A549 (cell line): ENCODE measurements at regions of chr1 and their contacts with region 1.

Region 1: GRCh38 chr1:149886396-149887195 is 12.8 kb upstream of the BOLA1 start:
- DNase-seq: peak; percentile 93 to 99
- ATAC-seq: peak; percentile 59 to 74
- H3K4me3 ChIP-seq: peak overlapping the region; percentile 54
- H3K27ac ChIP-seq: peak overlapping the region; percentile 91 to 96
- H3K4me1 ChIP-seq: peaks cover 22% of the 10 kb centered on the region
- CTCF ChIP-seq: no peak
- EP300 ChIP-seq: no peak
- POLR2A ChIP-seq: peak; percentile 95
- RAD21 ChIP-seq: 0 out of 5 replicates have a peak, but pooled peaks of 1 of the 2 experiments have one; percentile 6

Region 2: DNA sequence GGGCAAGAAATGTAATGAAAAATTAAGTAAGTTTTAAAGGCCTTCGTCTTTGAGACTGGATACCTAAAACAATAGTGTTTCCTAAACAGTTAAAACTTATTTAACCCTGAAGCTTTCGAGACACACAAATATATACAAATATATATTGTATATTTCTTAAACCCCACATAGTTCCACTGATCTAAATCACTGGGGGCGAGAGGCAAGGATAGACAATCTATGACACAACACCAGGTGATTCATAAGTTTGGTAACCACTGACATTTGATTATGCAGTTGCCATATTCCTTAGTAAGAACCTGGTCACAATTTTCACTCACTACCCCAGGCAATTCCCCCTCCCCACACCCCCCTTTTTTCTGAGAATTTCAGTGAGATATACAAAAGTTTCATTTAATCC is 42.5 kb before region 1 on chr1:
- CTCF ChIA-PET with region 1: interaction called, 8 read pairs
- POLR2A ChIA-PET with region 1: interaction called, 34 read pairs
- DNase-seq: peak; percentile 15 to 55
- ATAC-seq: no peak
- H3K4me3 ChIP-seq: peak overlapping the region; percentile 55
- H3K27ac ChIP-seq: peak overlapping the region; percentile 79 to 89
- H3K4me1 ChIP-seq: peaks cover 48% of the 10 kb centered on the region
- CTCF ChIP-seq: no peak
- EP300 ChIP-seq: no peak
- POLR2A ChIP-seq: no peak
- RAD21 ChIP-seq: no peak

Region 3: DNA sequence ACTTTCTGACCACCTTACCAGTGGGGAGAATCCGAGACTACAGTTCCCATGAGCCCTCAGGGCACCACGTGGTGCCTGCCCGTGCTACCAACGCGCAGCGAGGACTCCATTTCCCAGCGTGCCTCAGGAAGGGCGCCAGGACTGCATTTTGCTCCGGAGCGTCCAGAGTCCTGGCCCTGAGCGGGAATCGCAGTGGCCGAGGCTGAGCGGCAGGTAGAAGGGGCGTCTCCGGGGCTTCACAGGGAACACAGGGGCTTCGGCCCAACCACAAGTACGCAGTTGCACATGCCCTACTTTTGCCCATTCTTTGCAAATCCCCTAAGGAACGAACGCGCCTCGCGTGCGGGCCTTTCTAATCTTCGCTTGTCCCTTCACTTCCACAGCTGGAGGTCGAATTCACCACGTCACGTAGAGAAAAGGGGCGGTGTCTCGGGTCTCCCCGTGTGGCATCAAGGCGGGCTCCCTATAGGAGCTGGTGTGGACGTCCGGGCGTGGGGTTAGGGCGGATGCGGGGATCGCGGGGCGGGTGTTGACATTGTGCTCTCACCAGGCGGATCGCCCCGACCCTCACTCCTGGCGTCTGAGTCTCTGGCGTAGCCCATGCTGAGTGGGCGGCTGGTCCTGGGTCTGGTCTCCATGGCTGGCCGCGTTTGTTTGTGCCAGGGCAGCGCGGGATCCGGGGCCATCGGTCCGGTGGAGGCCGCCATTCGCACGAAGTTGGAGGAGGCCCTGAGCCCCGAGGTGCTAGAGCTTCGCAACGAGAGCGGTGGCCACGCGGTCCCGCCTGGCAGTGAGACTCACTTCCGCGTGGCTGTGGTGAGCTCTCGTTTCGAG is 13.1 kb after region 1 on chr1 and contains the start of gene BOLA1:
- CTCF ChIA-PET with region 1: interaction called, 11 read pairs
- POLR2A ChIA-PET with region 1: interaction called, 19 read pairs
- DNase-seq: peak; percentile 93 to 97
- ATAC-seq: peak; percentile 99 to 100
- H3K4me3 ChIP-seq: peak within 1 kb of the TSS; percentile 53
- H3K27ac ChIP-seq: peak within 1 kb of the TSS; percentile 82 to 91
- H3K4me1 ChIP-seq: peaks cover 8% of the 10 kb centered on the region
- CTCF ChIP-seq: no peak
- EP300 ChIP-seq: no peak
- POLR2A ChIP-seq: peak; percentile 80
- RAD21 ChIP-seq: no peak
- polyA plus RNA-seq, gene BOLA1: 26.7 and 27.5 TPM in 2 replicates

Region 4: GRCh38 chr1:149927503-149928387 is 41.1 kb after region 1 on chr1 and contains the start of gene SF3B4:
- CTCF ChIA-PET with region 1: interaction called, 12 read pairs
- POLR2A ChIA-PET with region 1: interaction called, 28 read pairs
- DNase-seq: peak; percentile 82 to 92
- ATAC-seq: peak; percentile 97 to 100
- H3K4me3 ChIP-seq: peak within 1 kb of the TSS; percentile 87
- H3K27ac ChIP-seq: peak within 1 kb of the TSS; percentile 92 to 99
- H3K4me1 ChIP-seq: peaks cover 24% of the 10 kb centered on the region
- CTCF ChIP-seq: no peak
- EP300 ChIP-seq: no peak
- POLR2A ChIP-seq: peak; percentile 89
- RAD21 ChIP-seq: no peak; a peak in 1 of 5 replicates
- polyA plus RNA-seq, gene SF3B4: 71.2 and 95.1 TPM in 2 replicates

Region 5: GRCh38 chr1:149942207-149942606 is 55.6 kb after region 1 on chr1:
- CTCF ChIA-PET with region 1: interaction called, 17 read pairs
- POLR2A ChIA-PET with region 1: interaction called, 70 read pairs
- DNase-seq: peak; percentile 49 to 58
- ATAC-seq: peak; percentile 43 to 69; a peak in 4 of 6 replicates
- H3K4me3 ChIP-seq: no peak overlapping the region
- H3K27ac ChIP-seq: no peak overlapping the region
- H3K4me1 ChIP-seq: peaks cover 37% of the 10 kb centered on the region
- CTCF ChIP-seq: no peak; the same call in 1 of the 3 replicates
- EP300 ChIP-seq: no peak
- POLR2A ChIP-seq: no peak
- RAD21 ChIP-seq: peak; percentile 33 to 39; a peak in 3 of 5 replicates

Region 6: DNA sequence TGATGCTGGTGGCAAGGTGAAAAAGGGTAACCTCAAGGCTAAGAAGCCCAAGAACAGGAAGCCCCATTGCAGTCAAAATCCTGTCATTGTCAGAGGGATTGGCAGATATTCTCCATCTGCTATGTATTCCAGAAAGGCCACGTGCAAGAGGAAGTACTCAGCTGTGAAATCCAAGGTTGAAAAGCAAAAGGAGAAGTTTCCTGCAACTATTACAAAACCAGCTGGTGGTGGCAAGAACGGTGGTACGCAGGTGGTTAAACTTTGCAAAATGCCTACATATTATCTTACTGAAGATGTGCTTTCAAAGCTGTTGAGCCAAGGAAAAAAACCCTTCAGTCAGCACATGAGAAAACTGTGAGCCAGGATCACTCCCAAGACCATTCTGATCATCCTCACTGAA is 167.3 kb after region 1 on chr1:
- CTCF ChIA-PET with region 1: interaction called, 16 read pairs
- POLR2A ChIA-PET with region 1: interaction called, 13 read pairs
- DNase-seq: no peak
- ATAC-seq: no peak
- H3K4me3 ChIP-seq: no peak overlapping the region
- H3K27ac ChIP-seq: no peak overlapping the region
- H3K4me1 ChIP-seq: 0 out of 3 replicates have a peak, but pooled peaks cover 3% of the 10 kb centered on the region
- CTCF ChIP-seq: no peak
- EP300 ChIP-seq: no peak
- POLR2A ChIP-seq: no peak
- RAD21 ChIP-seq: no peak